Caco-2 (cell line): ENCODE measurements at regions of chr22 and their contacts with region 1.

Region 1: GRCh38 chr22:22156716-22157347 is 87.8 kb upstream of the VPREB1 start:
- DNase-seq: peak; percentile 58 to 65
- H3K4me3 ChIP-seq: no peak overlapping the region
- H3K4me3 Mint-ChIP-seq: peak overlapping the region; percentile 14
- H3K27ac Mint-ChIP-seq: no peak overlapping the region
- H3K4me1 ChIP-seq: no peaks in the 10 kb centered on the region
- H3K4me1 Mint-ChIP-seq: no peaks in the 10 kb centered on the region
- H3K27me3 ChIP-seq: no peaks in the 10 kb centered on the region
- H3K27me3 Mint-ChIP-seq: peaks cover 16% of the 10 kb centered on the region
- CTCF ChIP-seq: peak; percentile 71 to 81

Region 2: DNA sequence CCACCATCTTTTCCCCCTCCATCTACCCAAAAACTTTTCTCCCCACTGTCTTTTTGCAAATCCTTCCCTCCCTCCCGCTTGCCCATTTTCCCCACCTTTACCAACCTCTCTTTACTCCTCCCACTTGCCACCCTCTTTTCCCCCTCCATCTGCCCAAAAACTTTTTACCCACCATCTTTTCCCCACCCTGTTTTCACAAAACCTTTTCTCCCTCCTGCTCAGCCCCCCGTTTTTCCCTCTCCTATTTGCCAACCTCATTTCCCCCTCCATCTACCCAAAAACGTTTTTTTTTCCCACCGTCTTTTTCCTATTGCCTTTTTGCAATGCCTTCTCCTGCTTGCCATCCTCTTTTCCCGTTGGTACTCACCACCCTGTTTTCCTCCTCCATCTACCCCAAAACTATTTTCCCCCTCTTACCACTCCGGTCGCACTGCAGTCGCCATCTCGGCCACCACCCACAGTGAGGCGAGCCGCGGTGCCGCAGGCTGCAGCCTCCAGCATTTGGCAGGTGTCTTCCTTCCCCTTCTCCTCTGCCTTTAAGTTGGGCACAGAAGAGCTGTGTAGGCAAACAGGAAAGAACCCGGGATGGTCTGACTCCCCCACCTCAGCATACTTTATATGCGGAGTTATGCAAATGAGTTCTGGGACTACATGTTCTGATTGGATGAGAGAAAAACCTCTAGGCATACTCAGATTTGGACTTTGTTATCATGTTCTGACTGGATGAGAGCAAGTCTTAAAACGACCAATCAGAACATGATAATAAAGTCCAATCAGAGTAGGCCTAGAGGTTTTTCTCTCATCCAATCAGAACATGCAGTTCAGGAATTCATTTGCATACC is 33.5 kb before region 1 on chr22:
- CTCF ChIA-PET with region 1: no interaction called
- POLR2A ChIA-PET with region 1: no interaction called
- intact Hi-C with region 1: no loop called
- DNase-seq: peak in 1 of 2 experiments; percentile 5
- H3K4me3 ChIP-seq: no peak overlapping the region
- H3K4me3 Mint-ChIP-seq: no peak overlapping the region
- H3K27ac Mint-ChIP-seq: no peak overlapping the region
- H3K4me1 ChIP-seq: no peaks in the 10 kb centered on the region
- H3K4me1 Mint-ChIP-seq: no peaks in the 10 kb centered on the region
- H3K27me3 ChIP-seq: no peaks in the 10 kb centered on the region; the same call in 1 of the 2 replicates
- H3K27me3 Mint-ChIP-seq: peaks cover 8% of the 10 kb centered on the region
- CTCF ChIP-seq: no peak

Region 3: GRCh38 chr22:22195265-22196017 is 38.6 kb after region 1 on chr22:
- CTCF ChIA-PET with region 1: no interaction called
- POLR2A ChIA-PET with region 1: no interaction called
- intact Hi-C with region 1: loop called (anchors 2 kb)
- DNase-seq: peak; percentile 88 to 92
- H3K4me3 ChIP-seq: no peak overlapping the region
- H3K4me3 Mint-ChIP-seq: no peak overlapping the region
- H3K27ac Mint-ChIP-seq: no peak overlapping the region
- H3K4me1 ChIP-seq: no peaks in the 10 kb centered on the region
- H3K4me1 Mint-ChIP-seq: peaks cover 8% of the 10 kb centered on the region
- H3K27me3 ChIP-seq: no peaks in the 10 kb centered on the region; the same call in 1 of the 2 replicates
- H3K27me3 Mint-ChIP-seq: peaks cover 24% of the 10 kb centered on the region
- CTCF ChIP-seq: peak; percentile 94 to 95